ENCODE measurements at regions of chr1 and their contacts with region 1.

Region 1: GRCh38 chr1:182588500-182589452 is at the start of gene RNASEL:
- DNase-seq: no peak
- CTCF ChIP-seq: no peak

Region 2: GRCh38 chr1:182084487-182085316 is 504.1 kb before region 1 on chr1:
- in situ Hi-C with region 1: loop called (anchors 25 kb)
- DNase-seq: peak; percentile 86
- CTCF ChIP-seq: peak; percentile 75

Region 3: GRCh38 chr1:182446033-182446669 is 142.6 kb before region 1 on chr1:
- in situ Hi-C with region 1: loop called (anchors 5 kb)
- DNase-seq: peak; percentile 66
- CTCF ChIP-seq: peak; percentile 55

Region 4: GRCh38 chr1:182633672-182634176 is 44.9 kb after region 1 on chr1:
- in situ Hi-C with region 1: no loop called
- DNase-seq: no peak
- CTCF ChIP-seq: no peak

Measured in GM13976 (cell line).